ENCODE measurements at regions of chr6 and their contacts with region 1.

Region 1: GRCh38 chr6:127342946-127343808 is at the start of gene ECHDC1:
- DNase-seq: peak; percentile 71
- H3K4me3 ChIP-seq: peak within 1 kb of the TSS; percentile 78 to 91 (median 84)
- H3K27ac ChIP-seq: peak within 1 kb of the TSS; percentile 93
- H3K4me1 ChIP-seq: peaks cover 38% of the 10 kb centered on the region
- H3K27me3 ChIP-seq: no peaks in the 10 kb centered on the region
- CTCF ChIP-seq: no peak
- total RNA-seq, gene ECHDC1: 54.2 to 54.9 TPM

Region 2: DNA sequence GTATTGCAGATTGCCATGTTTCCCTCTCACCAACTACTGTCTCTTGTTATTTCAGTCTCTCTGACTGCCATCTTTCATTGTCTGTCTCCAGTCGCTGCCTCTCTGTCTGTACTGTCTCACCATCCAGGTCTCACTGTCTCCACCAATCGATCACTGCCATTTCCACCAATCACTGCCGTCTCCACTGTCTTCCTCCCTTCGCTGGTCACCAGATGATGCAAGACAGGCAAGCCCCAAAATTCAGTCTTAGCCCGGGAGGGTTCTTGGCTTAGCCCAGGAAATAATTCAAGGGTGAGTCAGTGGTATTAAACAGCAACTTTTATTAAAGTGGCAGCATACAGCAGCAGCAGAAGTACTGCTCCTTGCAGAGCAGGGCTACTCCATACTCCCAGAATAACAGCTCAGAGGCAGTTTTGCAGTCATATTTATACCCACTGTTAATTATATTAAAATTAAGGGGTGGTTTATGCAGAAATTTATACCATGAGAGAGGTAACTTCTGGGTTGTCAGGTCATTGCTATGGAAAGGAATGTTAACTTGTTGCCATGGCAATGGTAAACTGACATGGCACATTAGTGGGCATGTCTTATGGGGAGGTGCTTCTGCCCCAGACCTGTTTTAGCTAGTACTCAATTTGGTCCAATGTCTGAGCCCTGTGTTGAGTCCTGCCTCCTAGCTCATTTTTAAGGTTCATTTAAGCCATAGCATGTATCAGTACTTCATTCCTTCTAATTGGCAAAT is 23.3 kb after region 1 on chr6:
- CTCF ChIA-PET with region 1: no interaction called
- dilution Hi-C with region 1: no loop called
- in situ Hi-C with region 1: no loop called
- intact Hi-C with region 1: loop called (anchors 1 kb)
- DNase-seq: peak; percentile 99
- H3K4me3 ChIP-seq: no peak overlapping the region
- H3K27ac ChIP-seq: peak overlapping the region; percentile 94
- H3K4me1 ChIP-seq: peaks cover 18% of the 10 kb centered on the region
- H3K27me3 ChIP-seq: no peaks in the 10 kb centered on the region
- CTCF ChIP-seq: no peak

Region 3: DNA sequence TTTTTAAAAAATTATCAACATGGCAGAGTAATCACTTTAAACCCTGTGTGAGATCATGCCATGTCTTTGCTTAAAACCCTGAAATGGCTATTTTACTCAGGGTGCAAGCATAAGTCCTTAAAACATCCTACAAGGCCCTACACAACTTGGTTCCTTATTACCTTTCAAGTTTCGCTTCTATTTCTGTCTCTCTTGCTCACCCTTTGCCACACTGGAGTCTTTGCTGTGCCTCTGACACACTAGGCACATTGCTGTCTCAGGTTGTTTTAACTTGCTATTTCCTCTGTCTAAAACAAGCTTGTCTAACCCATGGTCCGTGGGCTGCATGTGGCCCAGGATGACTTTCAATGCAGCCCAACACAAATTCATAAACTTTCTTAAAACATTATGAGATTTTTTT is 60.5 kb after region 1 on chr6:
- CTCF ChIA-PET with region 1: no interaction called
- dilution Hi-C with region 1: no loop called
- in situ Hi-C with region 1: no loop called
- intact Hi-C with region 1: loop called (anchors 5 kb)
- DNase-seq: no peak
- H3K4me3 ChIP-seq: no peak overlapping the region
- H3K27ac ChIP-seq: no peak overlapping the region
- H3K4me1 ChIP-seq: peaks cover 4% of the 10 kb centered on the region
- H3K27me3 ChIP-seq: no peaks in the 10 kb centered on the region
- CTCF ChIP-seq: no peak

Region 4: GRCh38 chr6:127420556-127420955 is 77.4 kb after region 1 on chr6:
- CTCF ChIA-PET with region 1: interaction called, 13 read pairs
- dilution Hi-C with region 1: no loop called
- in situ Hi-C with region 1: no loop called
- intact Hi-C with region 1: loop called (anchors 1 kb)
- DNase-seq: peak; percentile 89
- H3K4me3 ChIP-seq: no peak overlapping the region
- H3K27ac ChIP-seq: peak overlapping the region; percentile 40
- H3K4me1 ChIP-seq: peaks cover 7% of the 10 kb centered on the region
- H3K27me3 ChIP-seq: no peaks in the 10 kb centered on the region
- CTCF ChIP-seq: peak; percentile 6 to 56

Region 5: DNA sequence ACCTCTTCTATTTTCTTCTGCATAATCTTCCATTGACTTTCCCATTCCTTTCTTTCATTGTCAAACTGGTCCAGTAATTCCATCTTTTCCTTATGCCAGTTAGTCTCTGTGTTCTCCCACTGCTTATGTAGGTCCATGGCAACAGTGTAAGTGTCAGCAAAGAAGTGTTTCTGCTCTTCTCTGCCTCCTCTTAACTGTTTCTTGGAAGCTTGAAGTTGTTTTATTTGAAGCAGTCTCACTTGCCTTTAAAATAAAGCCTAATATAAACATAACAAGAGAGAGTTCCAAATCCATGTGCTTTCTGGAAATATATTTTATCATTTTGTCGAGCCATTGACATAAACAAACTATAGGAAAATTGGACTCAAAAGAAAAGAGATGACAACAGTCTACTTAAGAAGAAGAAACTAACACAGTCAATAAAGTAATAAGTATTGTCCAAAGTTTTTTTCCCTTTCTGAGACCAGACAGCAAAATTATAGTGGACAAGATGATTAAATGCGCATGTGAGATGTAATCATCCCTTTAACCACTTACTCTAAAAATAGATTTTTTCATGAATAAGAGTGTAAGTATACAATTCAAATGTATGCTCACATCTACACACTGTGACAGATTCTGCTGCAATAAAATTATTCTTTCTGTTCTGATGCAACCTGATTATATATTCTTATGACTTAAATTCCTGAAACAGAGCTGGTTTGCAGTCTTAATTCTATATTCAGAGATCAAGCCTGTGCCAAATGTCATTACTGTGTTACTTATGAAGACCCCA is 110.9 kb after region 1 on chr6:
- CTCF ChIA-PET with region 1: no interaction called
- dilution Hi-C with region 1: no loop called
- in situ Hi-C with region 1: no loop called
- intact Hi-C with region 1: no loop called
- DNase-seq: no peak
- H3K4me3 ChIP-seq: no peak overlapping the region
- H3K27ac ChIP-seq: no peak overlapping the region
- H3K4me1 ChIP-seq: no peaks in the 10 kb centered on the region
- H3K27me3 ChIP-seq: no peaks in the 10 kb centered on the region
- CTCF ChIP-seq: no peak

Region 6: DNA sequence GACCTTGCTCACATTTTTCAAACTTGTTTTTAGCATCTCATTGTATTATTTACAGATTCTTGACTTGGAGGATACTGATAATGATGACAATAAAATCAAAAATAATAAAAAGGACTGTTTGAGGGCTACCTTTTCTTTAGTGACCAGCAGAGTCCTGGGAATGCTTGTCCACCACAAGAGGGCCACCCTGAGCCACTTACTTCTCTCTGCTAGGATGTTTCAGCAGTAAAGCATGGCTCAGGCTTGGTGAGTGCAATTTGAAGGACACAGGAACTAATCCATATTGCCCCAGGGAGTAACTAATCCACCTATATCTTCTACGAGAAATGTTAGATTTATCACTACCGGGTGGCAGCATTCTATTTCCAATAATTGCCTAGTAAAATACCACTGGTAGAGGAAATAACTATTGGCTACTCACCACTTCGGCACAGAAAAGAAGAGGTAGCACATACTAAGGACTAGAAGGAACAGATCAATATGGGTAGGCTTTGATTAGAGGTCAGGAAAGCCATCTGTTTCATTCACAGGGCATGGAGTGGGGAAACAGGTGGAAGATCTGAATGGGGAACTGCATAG is 121.8 kb after region 1 on chr6:
- CTCF ChIA-PET with region 1: no interaction called
- dilution Hi-C with region 1: no loop called
- in situ Hi-C with region 1: no loop called
- intact Hi-C with region 1: loop called (anchors 2 kb)
- DNase-seq: peak; percentile 43
- H3K4me3 ChIP-seq: no peak overlapping the region
- H3K27ac ChIP-seq: no peak overlapping the region
- H3K4me1 ChIP-seq: no peaks in the 10 kb centered on the region
- H3K27me3 ChIP-seq: peaks cover 3% of the 10 kb centered on the region
- CTCF ChIP-seq: peak; percentile 92 to 93

Measured in mammary epithelial cell (primary cell).